Calu3 (cell line): ENCODE measurements at regions of chr2 and their contacts with region 1.

Region 1: DNA sequence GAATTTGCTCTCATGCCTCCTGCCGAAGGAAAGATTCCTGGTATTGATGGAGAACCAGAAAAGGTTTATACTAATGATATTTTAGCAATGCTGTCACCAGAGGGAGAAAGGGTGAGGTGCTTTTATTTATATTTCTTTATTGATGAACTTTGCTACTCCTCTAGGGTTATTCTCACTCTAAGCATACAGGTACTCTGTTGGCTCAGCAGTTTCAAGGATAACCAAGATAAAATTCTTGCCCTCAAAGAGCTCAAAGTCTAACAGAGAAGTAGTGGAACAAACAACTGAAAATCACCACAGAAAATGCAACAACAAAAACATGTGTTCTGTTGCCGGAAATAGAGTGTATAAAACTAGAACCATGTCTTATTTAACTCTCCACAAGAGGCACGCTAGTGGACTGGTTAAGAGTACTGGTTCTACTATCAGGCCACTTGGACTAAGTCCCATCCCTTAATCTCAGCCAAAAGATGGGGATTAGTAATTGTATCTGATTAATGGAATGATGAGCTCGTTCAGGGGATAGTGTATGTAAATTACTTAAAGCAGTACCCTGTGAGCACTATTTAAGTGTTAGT is 103.6 kb downstream of the DNAH6 start:
- DNase-seq: no peak
- H3K4me3 Mint-ChIP-seq: no peak overlapping the region
- H3K27ac Mint-ChIP-seq: no peak overlapping the region
- H3K4me1 Mint-ChIP-seq: no peaks in the 10 kb centered on the region
- H3K27me3 Mint-ChIP-seq: no peaks in the 10 kb centered on the region
- CTCF ChIP-seq: no peak

Region 2: DNA sequence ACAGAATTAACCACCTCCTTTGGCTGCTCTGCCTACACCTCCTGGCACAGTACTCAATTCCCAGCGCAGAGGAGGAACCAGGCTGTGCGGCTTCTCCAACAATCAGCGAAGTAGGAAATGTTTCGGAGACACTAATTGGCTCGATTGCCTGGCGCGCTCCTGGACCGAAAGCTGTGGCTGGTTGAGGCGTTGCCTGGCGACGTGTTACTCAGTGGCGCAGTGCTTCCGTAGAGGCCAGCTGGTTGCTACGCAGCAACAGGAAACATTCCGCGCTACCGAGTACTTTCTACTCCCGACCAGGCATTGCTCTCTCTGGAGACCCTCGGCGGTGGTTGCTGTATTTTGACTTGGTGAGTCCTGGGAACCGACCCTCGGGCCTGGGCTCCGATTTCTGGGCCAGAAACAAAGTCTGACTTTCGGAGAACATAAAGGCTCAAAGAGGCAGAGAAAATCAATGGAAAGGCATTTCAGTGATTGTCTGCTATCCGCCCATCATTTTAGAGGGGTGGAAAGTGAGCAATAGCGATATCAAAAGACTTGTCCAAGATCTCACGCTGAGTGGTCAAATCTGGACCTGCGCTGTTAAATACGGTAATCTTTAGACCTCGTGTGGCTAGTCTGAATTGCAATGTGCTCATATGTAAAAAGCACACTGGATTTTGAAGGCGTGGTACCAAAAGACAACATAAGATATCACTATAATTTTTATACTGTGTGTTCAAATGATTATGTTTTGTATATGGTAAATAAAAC is 103.5 kb before region 1 on chr2 and contains the start of gene DNAH6:
- CTCF ChIA-PET with region 1: no interaction called
- intact Hi-C with region 1: loop called (anchors 5 kb)
- DNase-seq: peak; percentile 87
- H3K4me3 Mint-ChIP-seq: peak within 1 kb of the TSS; percentile 71
- H3K27ac Mint-ChIP-seq: peak within 1 kb of the TSS; percentile 75
- H3K4me1 Mint-ChIP-seq: no peaks in the 10 kb centered on the region
- H3K27me3 Mint-ChIP-seq: no peaks in the 10 kb centered on the region
- CTCF ChIP-seq: no peak
- total RNA-seq, gene DNAH6: 0.95 and 1.3 TPM in 2 replicates